Activated B cell treated with CpG ODN at 0.5 μM for 24 hours (primary cell): ENCODE measurements at regions of chrX and their contacts with region 1.

Region 1: GRCh38 chrX:16445166-16445752 is 204.7 kb upstream of the S100G start:
- DNase-seq: peak; percentile 15
- ATAC-seq: peak; percentile 62
- H3K4me3 Mint-ChIP-seq: no peak overlapping the region
- H3K27ac Mint-ChIP-seq: no peak overlapping the region
- H3K4me1 Mint-ChIP-seq: no peaks in the 10 kb centered on the region
- H3K27me3 Mint-ChIP-seq: peaks cover 2% of the 10 kb centered on the region
- CTCF ChIP-seq: no peak

Region 2: GRCh38 chrX:15493118-15493962 is 951.9 kb before region 1 on chrX and contains the start of gene PIR:
- CTCF ChIA-PET with region 1: no interaction called
- POLR2A ChIA-PET with region 1: no interaction called
- intact Hi-C with region 1: loop called (anchors 1 kb)
- DNase-seq: peak; percentile 19
- ATAC-seq: peak; percentile 84
- H3K4me3 Mint-ChIP-seq: peak within 1 kb of the TSS; percentile 83
- H3K27ac Mint-ChIP-seq: peak within 1 kb of the TSS; percentile 25
- H3K4me1 Mint-ChIP-seq: peaks cover 8% of the 10 kb centered on the region
- H3K27me3 Mint-ChIP-seq: peaks cover 5% of the 10 kb centered on the region
- CTCF ChIP-seq: no peak
- total RNA-seq, gene PIR: 0.82 and 1.7 TPM in 2 replicates

Region 3: DNA sequence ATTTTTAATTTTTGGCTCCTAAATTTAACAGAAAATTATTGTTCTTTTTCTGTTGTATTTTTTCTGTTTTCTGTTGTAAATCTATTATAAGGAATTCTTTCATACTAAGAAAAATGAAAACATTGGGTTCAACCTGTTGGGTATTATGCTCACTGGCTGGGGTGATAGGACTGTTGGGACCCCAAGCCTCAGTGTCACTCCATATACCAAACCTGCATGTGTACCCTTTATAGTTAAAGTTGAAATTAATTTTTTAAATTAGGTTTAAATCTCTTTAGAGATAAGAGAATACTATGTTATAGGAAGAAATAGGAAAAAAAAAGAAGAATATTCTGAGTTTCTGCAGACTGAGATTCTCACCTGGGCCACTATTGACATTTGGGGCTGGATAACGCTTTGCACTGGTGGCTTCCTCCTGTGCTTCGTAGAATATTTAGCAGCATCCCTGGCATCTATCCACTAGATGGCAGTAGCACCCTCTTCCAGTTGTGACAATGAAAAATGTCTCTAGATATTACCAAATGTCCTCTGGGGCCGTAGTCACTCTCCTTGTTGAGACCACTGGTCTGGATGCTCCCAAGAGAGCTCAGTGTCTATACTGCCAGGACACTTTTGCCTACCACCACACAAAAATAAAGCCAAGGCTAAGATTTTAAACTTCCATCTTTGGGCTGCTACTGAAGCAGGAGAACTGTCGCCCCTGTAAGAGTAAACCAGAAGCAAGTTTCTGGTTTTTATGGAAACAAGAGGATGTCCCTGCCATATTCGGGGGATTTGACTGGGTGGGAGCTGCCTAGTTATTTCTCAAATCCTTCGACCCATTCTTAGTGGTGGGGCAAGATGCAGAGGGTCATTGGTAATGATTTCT is 758.2 kb before region 1 on chrX:
- CTCF ChIA-PET with region 1: no interaction called
- POLR2A ChIA-PET with region 1: no interaction called
- intact Hi-C with region 1: loop called (anchors 1 kb)
- DNase-seq: no peak
- ATAC-seq: peak; percentile 89
- H3K4me3 Mint-ChIP-seq: no peak overlapping the region
- H3K27ac Mint-ChIP-seq: no peak overlapping the region
- H3K4me1 Mint-ChIP-seq: peaks cover 3% of the 10 kb centered on the region
- H3K27me3 Mint-ChIP-seq: no peaks in the 10 kb centered on the region
- CTCF ChIP-seq: no peak

Region 4: GRCh38 chrX:15761564-15762191 is 683.6 kb before region 1 on chrX:
- CTCF ChIA-PET with region 1: no interaction called
- POLR2A ChIA-PET with region 1: no interaction called
- intact Hi-C with region 1: loop called (anchors 1 kb)
- DNase-seq: no peak
- ATAC-seq: peak; percentile 37
- H3K4me3 Mint-ChIP-seq: no peak overlapping the region
- H3K27ac Mint-ChIP-seq: peak overlapping the region; percentile 50
- H3K4me1 Mint-ChIP-seq: peaks cover 10% of the 10 kb centered on the region
- H3K27me3 Mint-ChIP-seq: no peaks in the 10 kb centered on the region
- CTCF ChIP-seq: no peak

Region 5: DNA sequence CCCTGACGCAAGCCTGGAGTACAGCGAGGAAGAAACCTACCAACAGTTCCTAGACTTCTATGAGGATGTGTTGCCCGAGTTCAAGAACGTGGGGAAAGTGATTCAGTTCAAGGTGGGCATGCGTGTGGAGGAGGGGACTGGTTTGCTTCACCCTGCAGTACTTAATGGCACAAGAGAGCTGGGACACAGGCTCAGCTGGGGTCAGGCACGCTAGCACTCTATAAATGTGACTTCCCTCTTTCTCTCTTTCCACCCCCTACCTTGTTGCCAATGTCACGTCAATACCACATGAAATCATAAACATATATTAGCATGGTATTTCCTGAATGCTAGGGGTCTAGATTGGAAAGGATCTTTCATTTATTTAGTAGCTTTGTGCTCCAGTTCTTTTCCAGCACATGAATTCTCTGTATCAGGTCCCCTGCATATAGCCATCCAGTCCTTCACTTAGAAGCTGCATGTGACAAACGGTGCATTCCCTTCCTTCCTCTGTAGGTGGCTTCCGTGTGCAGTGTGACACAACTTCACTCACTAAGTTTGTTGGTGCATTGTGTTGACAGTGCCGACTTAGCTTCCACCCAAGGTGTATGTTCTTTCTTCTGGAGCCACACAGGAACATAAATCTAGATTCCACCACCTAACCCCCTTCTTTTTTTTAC is 629.4 kb before region 1 on chrX:
- CTCF ChIA-PET with region 1: interaction called, 3 read pairs
- POLR2A ChIA-PET with region 1: no interaction called
- intact Hi-C with region 1: loop called (anchors 1 kb)
- DNase-seq: no peak
- ATAC-seq: peak; percentile 65
- H3K4me3 Mint-ChIP-seq: no peak overlapping the region
- H3K27ac Mint-ChIP-seq: no peak overlapping the region
- H3K4me1 Mint-ChIP-seq: no peaks in the 10 kb centered on the region
- H3K27me3 Mint-ChIP-seq: no peaks in the 10 kb centered on the region
- CTCF ChIP-seq: no peak

Region 6: GRCh38 chrX:15849555-15849954 is 595.7 kb before region 1 on chrX:
- CTCF ChIA-PET with region 1: interaction called, 4 read pairs
- POLR2A ChIA-PET with region 1: no interaction called
- intact Hi-C with region 1: loop called (anchors 1 kb)
- DNase-seq: no peak
- ATAC-seq: no peak
- H3K4me3 Mint-ChIP-seq: no peak overlapping the region
- H3K27ac Mint-ChIP-seq: peak overlapping the region; percentile 32
- H3K4me1 Mint-ChIP-seq: peaks cover 40% of the 10 kb centered on the region
- H3K27me3 Mint-ChIP-seq: no peaks in the 10 kb centered on the region
- CTCF ChIP-seq: no peak

Region 7: GRCh38 chrX:15930585-15930984 is 514.7 kb before region 1 on chrX:
- CTCF ChIA-PET with region 1: interaction called, 16 read pairs
- POLR2A ChIA-PET with region 1: no interaction called
- intact Hi-C with region 1: loop called (anchors 2 kb)
- DNase-seq: no peak
- ATAC-seq: no peak
- H3K4me3 Mint-ChIP-seq: no peak overlapping the region
- H3K27ac Mint-ChIP-seq: no peak overlapping the region
- H3K4me1 Mint-ChIP-seq: peaks cover 14% of the 10 kb centered on the region
- H3K27me3 Mint-ChIP-seq: no peaks in the 10 kb centered on the region
- CTCF ChIP-seq: no peak